Esophagus muscularis mucosa (tissue), 4 donors: ENCODE measurements at regions of chr10 and their contacts with region 1.

Region 1: GRCh38 chr10:122014652-122015248 is 25.8 kb downstream of the TACC2 start:
- DNase-seq: no peak
- H3K4me3 ChIP-seq: no peak overlapping the region
- H3K27ac ChIP-seq: no peak overlapping the region
- H3K4me1 ChIP-seq: peaks cover 5 to 33% (median 25%) of the 10 kb centered on the region in 4 donors
- H3K27me3 ChIP-seq: no peaks in the 10 kb centered on the region
- CTCF ChIP-seq: no peak
- EP300 ChIP-seq: no peak
- POLR2A ChIP-seq: no peak

Region 2: DNA sequence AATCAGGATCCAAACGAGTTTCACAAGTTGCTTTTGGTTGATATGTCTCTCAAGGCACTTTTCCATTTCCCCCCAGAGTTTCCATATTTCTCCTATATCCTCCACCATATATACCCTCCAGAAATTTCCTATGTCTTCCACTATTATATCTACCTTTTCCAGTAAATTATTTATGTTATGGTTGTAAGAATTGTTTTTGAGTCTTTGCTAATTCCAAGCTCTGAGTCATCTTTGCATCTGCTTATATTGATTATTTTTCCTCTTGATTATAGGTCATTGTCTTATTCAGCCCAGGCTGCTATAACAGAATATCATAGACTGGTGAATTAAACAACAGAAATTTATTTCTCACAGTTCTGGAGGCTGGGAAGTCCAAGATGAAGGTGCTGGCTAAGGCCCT is 13.1 kb before region 1 on chr10:
- intact Hi-C with region 1: loop called (anchors 2 kb)
- DNase-seq: no peak
- H3K4me3 ChIP-seq: no peak overlapping the region
- H3K27ac ChIP-seq: no peak overlapping the region
- H3K4me1 ChIP-seq: peaks cover 0 to 30% (median 6%) of the 10 kb centered on the region in 4 donors
- H3K27me3 ChIP-seq: no peaks in the 10 kb centered on the region
- CTCF ChIP-seq: no peak
- EP300 ChIP-seq: no peak
- POLR2A ChIP-seq: no peak

Region 3: GRCh38 chr10:122078965-122079795 is 64.4 kb after region 1 on chr10:
- intact Hi-C with region 1: no loop called
- DNase-seq: no peak
- H3K4me3 ChIP-seq: no peak overlapping the region
- H3K27ac ChIP-seq: peak overlapping the region in 2 of 4 donors; percentile 14 to 51
- H3K4me1 ChIP-seq: peaks cover 2 to 24% (median 6%) of the 10 kb centered on the region in 4 donors
- H3K27me3 ChIP-seq: no peaks in the 10 kb centered on the region
- CTCF ChIP-seq: no peak
- EP300 ChIP-seq: no peak
- POLR2A ChIP-seq: no peak